CD4-positive, alpha-beta T cell (primary cell): ENCODE measurements at regions of chr7 and their contacts with region 1.

Region 1: GRCh38 chr7:36152756-36153570 is at the start of gene EEPD1:
- DNase-seq: peak; percentile 99 to 100 (median 100)
- ATAC-seq: peak; percentile 96
- H3K4me3 ChIP-seq: peak within 1 kb of the TSS; percentile 69
- H3K4me3 Mint-ChIP-seq: peak within 1 kb of the TSS; percentile 90
- H3K27ac ChIP-seq: peak within 1 kb of the TSS; percentile 30 to 35
- H3K27ac Mint-ChIP-seq: peak within 1 kb of the TSS; percentile 22
- H3K4me1 ChIP-seq: peaks cover 37% of the 10 kb centered on the region
- H3K4me1 Mint-ChIP-seq: peaks cover 45% of the 10 kb centered on the region
- H3K27me3 ChIP-seq: no peaks in the 10 kb centered on the region
- H3K27me3 Mint-ChIP-seq: no peaks in the 10 kb centered on the region
- CTCF ChIP-seq: no peak
- total RNA-seq, gene EEPD1: 4.4 to 4.6 TPM

Region 2: GRCh38 chr7:34916267-34916666 is 1236.7 kb before region 1 on chr7:
- CTCF ChIA-PET with region 1: no interaction called
- POLR2A ChIA-PET with region 1: no interaction called
- intact Hi-C with region 1: no loop called
- DNase-seq: no peak
- ATAC-seq: no peak
- H3K4me3 ChIP-seq: no peak overlapping the region
- H3K4me3 Mint-ChIP-seq: no peak overlapping the region
- H3K27ac ChIP-seq: no peak overlapping the region
- H3K27ac Mint-ChIP-seq: no peak overlapping the region
- H3K4me1 ChIP-seq: no peaks in the 10 kb centered on the region
- H3K4me1 Mint-ChIP-seq: no peaks in the 10 kb centered on the region
- H3K27me3 ChIP-seq: no peaks in the 10 kb centered on the region
- H3K27me3 Mint-ChIP-seq: peaks cover 19% of the 10 kb centered on the region
- CTCF ChIP-seq: no peak

Region 3: DNA sequence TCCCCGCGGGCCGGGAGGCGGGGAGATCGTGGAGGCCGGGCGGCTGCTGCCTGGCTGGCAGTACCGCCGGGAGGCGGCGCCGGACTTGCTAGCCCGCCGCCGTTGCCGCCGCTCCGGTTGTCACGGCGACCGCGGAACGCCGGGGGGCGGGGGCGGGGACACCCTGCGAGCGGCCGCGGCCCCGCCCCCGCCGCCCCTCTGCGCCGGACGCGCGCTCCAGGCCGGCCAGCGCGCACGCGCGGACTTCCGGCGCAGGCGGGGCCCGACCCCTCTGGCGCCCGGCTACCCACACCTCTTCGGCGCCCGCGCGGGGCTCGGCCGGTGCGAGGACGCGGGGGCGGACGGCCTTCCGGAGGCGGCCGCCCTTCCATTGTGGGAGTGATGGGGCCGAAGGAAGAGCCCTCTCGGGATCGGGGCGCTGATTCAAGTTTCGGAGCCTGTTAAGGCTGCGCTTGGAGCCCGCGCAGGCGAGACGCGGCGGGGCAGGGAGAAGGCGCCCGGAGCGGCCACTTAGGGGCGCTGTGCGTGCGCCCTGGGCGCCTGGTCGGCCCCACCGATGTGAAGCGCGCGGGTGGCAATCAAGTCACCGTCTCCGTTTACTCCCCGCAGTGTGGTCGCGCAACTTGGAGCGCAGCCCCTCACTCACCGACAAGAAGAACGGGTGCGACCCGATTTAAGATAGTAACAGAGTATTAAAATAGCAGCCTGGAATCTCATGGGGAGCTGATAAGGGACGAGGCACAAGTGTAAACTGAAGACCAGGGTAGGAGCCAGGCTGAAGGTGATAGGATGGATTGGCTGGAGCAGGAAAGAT is 1115.2 kb before region 1 on chr7:
- CTCF ChIA-PET with region 1: no interaction called
- POLR2A ChIA-PET with region 1: no interaction called
- intact Hi-C with region 1: loop called in 1 of 2 experiments (anchors 5 kb)
- DNase-seq: peak; percentile 66 to 96 (median 86)
- ATAC-seq: peak; percentile 73
- H3K4me3 ChIP-seq: peak overlapping the region; percentile 49
- H3K4me3 Mint-ChIP-seq: peak overlapping the region; percentile 92
- H3K27ac ChIP-seq: no peak overlapping the region
- H3K27ac Mint-ChIP-seq: peak overlapping the region; percentile 34
- H3K4me1 ChIP-seq: peaks cover 21% of the 10 kb centered on the region
- H3K4me1 Mint-ChIP-seq: peaks cover 30% of the 10 kb centered on the region
- H3K27me3 ChIP-seq: no peaks in the 10 kb centered on the region
- H3K27me3 Mint-ChIP-seq: no peaks in the 10 kb centered on the region
- CTCF ChIP-seq: peak; percentile 73

Region 4: DNA sequence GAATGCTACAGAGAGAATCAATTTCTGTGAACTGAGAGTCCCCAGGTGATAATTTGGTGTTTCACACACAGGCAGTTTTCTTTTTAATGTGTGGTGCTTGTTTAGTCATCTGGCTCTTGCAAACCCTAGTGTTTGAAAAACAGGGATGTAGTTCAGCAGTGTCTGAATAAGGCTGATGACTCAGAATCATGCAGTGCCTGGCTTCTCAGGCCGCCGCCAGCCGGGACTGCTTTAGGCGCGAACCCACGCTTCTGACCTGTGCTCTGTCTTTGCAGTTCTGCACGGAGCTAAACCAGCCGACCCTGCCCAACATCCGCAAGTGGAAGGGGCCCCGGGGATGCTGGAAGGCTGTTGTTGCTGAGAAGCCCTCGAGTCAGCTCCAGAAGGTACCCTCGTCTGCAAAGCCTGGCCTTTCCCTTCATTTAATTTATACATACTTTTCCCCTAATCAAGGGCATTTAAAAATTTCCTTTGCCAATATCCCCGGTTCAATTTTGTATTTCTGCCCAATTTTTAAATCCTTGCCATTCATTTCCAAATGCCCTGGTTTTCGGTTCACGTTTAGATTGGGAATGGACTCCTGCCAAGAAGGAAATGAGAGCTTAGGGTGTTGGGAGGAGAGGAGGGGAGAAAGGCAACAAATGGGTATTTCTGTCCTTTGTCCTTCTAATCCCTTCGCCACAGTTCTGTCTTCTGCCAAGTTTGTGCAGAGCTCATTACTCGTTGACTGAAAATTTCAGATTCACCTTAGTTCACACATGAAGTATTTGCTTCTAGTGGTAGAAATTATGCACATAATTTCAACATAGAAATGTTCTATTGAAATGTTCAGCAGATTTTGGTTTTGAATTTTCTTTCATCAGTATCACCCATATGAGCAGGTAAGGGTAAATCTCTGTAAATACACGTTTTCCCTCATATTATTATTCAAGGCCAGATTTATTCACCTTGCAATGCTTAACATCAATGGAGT is 128.2 kb after region 1 on chr7:
- CTCF ChIA-PET with region 1: no interaction called
- POLR2A ChIA-PET with region 1: interaction called, 4 read pairs
- intact Hi-C with region 1: loop called in 1 of 2 experiments (anchors 10 kb)
- DNase-seq: peak in 3 of 14 experiments; percentile 36 to 66 (median 58)
- ATAC-seq: peak; percentile 35
- H3K4me3 ChIP-seq: no peak overlapping the region
- H3K4me3 Mint-ChIP-seq: no peak overlapping the region
- H3K27ac ChIP-seq: no peak overlapping the region
- H3K27ac Mint-ChIP-seq: no peak overlapping the region
- H3K4me1 ChIP-seq: peaks cover 60% of the 10 kb centered on the region
- H3K4me1 Mint-ChIP-seq: peaks cover 58% of the 10 kb centered on the region
- H3K27me3 ChIP-seq: no peaks in the 10 kb centered on the region
- H3K27me3 Mint-ChIP-seq: no peaks in the 10 kb centered on the region
- CTCF ChIP-seq: no peak

Region 5: DNA sequence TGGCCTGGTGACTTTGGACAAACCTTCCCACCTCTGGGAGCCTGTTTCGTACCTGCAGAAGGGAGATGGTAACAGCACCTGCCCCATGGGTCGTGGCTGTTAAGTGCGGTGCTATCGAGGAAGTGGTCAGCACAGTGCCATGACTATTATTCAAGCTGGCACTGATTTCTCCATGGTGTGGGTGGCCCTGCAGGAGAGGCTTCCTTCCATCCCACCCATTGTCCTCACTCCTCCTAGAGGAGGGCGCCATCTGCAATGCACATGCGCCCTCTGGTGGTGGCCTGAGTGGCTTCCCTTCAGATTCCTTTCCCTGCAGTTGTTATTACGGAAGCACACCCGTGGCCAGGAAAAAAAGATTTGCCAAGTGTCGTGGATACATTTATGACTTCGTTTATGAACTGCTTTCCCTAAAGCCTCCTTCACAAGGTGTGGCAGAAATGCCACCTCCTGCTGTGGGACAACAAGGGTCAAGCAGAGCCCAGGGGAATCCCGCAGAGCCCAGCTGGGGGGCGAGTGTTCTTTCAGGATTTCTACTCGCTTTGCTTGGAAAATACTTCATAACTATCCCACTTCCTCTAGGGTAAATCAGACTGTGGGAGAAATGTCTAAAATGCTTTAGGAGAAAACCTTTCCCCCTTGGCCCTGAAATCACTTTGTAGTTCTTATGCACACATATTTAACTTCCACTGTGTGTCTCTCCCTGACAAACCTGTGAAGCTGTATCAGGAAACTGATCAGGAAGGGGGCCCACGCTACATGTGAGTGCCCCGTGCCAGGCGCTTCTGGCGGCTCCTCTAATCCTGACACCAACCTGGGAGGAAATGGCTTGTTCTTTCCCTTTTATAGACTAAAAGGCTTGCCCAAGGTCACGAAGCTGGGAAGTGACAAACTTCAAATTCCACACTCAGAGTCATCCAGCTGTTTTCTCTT is 138.7 kb after region 1 on chr7:
- CTCF ChIA-PET with region 1: interaction called, 3 read pairs
- POLR2A ChIA-PET with region 1: interaction called, 4 read pairs
- intact Hi-C with region 1: loop called (anchors 2 to 10 kb)
- DNase-seq: peak; percentile 56 to 88 (median 70)
- ATAC-seq: peak; percentile 27
- H3K4me3 ChIP-seq: peak overlapping the region; percentile 26
- H3K4me3 Mint-ChIP-seq: peak overlapping the region; percentile 65
- H3K27ac ChIP-seq: no peak overlapping the region
- H3K27ac Mint-ChIP-seq: peak overlapping the region; percentile 59
- H3K4me1 ChIP-seq: peaks cover 45% of the 10 kb centered on the region
- H3K4me1 Mint-ChIP-seq: peaks cover 46% of the 10 kb centered on the region
- H3K27me3 ChIP-seq: no peaks in the 10 kb centered on the region
- H3K27me3 Mint-ChIP-seq: no peaks in the 10 kb centered on the region
- CTCF ChIP-seq: peak; percentile 96

Region 6: DNA sequence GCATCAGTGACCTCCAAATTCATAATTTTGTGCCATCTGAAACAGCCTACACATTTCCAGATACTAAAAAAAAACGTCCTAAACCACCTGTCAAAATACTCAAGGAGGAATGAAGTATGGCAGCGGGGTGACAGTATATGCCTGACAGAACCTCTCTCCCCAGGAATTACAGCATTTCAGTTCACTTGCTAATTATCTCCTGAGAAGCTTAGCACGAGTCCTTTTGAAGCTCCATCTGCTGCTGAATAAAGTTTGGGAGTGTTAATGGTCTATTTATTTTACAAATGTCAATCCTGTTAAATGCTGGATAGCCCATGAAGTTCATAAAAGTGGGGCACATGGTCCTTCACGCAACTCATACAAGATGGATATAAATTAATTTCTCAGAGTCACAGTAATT is 207.3 kb after region 1 on chr7:
- CTCF ChIA-PET with region 1: no interaction called
- POLR2A ChIA-PET with region 1: no interaction called
- intact Hi-C with region 1: loop called in 1 of 2 experiments (anchors 5 kb)
- DNase-seq: no peak
- ATAC-seq: no peak
- H3K4me3 ChIP-seq: no peak overlapping the region
- H3K4me3 Mint-ChIP-seq: no peak overlapping the region
- H3K27ac ChIP-seq: no peak overlapping the region
- H3K27ac Mint-ChIP-seq: no peak overlapping the region
- H3K4me1 ChIP-seq: no peaks in the 10 kb centered on the region
- H3K4me1 Mint-ChIP-seq: no peaks in the 10 kb centered on the region
- H3K27me3 ChIP-seq: no peaks in the 10 kb centered on the region
- H3K27me3 Mint-ChIP-seq: no peaks in the 10 kb centered on the region
- CTCF ChIP-seq: no peak

Region 7: DNA sequence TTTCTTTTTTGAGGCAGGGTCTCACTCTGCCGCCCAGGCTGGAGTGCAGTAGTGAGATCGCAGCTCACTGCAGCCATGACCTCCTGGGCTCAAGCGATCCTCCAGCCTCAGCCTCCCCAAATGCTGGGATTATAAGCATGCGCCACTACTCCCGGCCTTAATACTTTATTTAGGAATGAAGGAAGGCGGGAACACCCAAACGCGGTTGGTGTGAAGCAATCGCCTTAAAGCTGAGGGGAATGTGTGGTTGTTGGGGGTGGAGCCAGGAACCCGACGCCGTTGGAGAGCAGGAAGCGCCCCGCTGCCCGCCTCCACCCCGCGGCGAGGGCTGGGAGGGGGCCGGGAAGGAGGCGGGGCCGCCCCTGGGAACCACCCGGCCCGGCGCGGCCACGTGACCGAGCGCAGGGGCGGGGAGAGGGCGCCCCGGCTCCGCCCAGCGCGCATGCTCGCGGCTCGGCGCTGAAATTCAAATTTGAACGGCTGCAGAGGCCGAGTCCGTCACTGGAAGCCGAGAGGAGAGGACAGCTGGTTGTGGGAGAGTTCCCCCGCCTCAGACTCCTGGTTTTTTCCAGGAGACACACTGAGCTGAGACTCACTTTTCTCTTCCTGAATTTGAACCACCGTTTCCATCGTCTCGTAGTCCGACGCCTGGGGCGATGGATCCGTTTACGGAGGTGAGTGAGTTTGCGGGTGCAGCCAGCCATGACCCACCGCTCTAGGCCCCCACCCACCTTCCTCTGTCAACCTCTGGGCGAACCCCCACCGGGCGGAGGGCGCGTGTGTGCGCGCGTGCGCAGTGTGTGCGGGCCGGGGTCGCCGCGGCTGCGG is 236.6 kb after region 1 on chr7 and contains the start of gene ANLN:
- CTCF ChIA-PET with region 1: no interaction called
- POLR2A ChIA-PET with region 1: no interaction called
- intact Hi-C with region 1: loop called in 1 of 2 experiments (anchors 5 kb)
- DNase-seq: peak; percentile 68 to 94 (median 80)
- ATAC-seq: peak; percentile 93
- H3K4me3 ChIP-seq: peak within 1 kb of the TSS; percentile 82
- H3K4me3 Mint-ChIP-seq: peak within 1 kb of the TSS; percentile 88
- H3K27ac ChIP-seq: peak within 1 kb of the TSS; percentile 37 to 77
- H3K27ac Mint-ChIP-seq: peak within 1 kb of the TSS; percentile 49
- H3K4me1 ChIP-seq: peaks cover 11% of the 10 kb centered on the region
- H3K4me1 Mint-ChIP-seq: peaks cover 24% of the 10 kb centered on the region
- H3K27me3 ChIP-seq: no peaks in the 10 kb centered on the region
- H3K27me3 Mint-ChIP-seq: peaks cover 4% of the 10 kb centered on the region
- CTCF ChIP-seq: no peak
- total RNA-seq, gene ANLN: 0.33 to 1.1 TPM